ENCODE measurements at regions of chr2 and their contacts with region 1.

Region 1: DNA sequence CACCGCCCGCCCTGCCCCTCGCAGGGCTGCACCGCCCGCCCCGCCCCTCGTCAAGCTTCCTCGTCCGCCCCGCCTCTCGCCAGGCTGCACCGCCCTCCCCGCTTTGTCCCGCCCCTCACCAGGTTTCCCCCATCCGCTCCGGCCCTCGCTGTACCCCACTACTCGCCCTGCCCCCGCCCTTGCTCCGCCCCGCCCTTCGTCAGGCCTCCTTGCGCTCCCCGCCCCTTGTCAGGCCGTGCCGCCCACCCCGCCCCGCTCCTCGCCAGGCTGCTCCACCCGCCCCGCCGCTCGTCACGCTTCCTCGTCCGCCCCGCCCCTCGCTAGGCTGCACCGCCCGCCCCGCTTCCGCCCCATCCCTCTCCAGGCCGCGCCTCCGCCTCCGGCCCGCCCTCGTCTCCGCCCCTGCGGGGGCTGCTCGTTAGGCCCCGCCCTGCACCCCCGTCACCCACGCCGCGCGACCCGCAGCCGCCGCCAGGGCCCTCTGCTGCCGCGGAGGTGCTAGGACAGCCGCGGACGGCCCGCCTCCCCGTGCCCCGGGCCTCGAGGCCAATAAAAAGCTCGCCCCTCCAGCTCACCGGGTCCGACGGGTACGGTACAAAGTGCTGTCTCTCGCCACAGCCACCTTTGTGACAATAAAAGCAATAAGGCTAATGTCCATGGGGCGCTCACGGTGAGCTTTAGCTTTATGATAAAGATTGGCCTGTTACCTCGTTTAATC is 574 bp upstream of the DNPEP start:
- DNase-seq: peak; percentile 100
- ATAC-seq: peak; percentile 81
- H3K4me3 Mint-ChIP-seq: peak overlapping the region; percentile 97
- H3K27ac Mint-ChIP-seq: peak overlapping the region; percentile 82
- H3K4me1 Mint-ChIP-seq: peaks cover 9% of the 10 kb centered on the region
- H3K27me3 Mint-ChIP-seq: no peaks in the 10 kb centered on the region

Region 2: GRCh38 chr2:218269899-218270720 is 1118.2 kb before region 1 on chr2 and contains the starts of genes AAMP and PNKD:
- CTCF ChIA-PET with region 1: no interaction called
- POLR2A ChIA-PET with region 1: no interaction called
- intact Hi-C with region 1: loop called (anchors 1 to 5 kb)
- DNase-seq: peak; percentile 100
- ATAC-seq: peak; percentile 92
- H3K4me3 Mint-ChIP-seq: peak within 1 kb of the TSS; percentile 88
- H3K27ac Mint-ChIP-seq: peak within 1 kb of the TSS; percentile 86
- H3K4me1 Mint-ChIP-seq: peaks cover 34% of the 10 kb centered on the region
- H3K27me3 Mint-ChIP-seq: no peaks in the 10 kb centered on the region
- total RNA-seq, gene AAMP: 49.7 to 72.2 TPM
- total RNA-seq, gene PNKD: 17.8 to 18.5 TPM

Region 3: GRCh38 chr2:218710687-218711549 is 677.4 kb before region 1 on chr2 and contains the start of gene TTLL4:
- CTCF ChIA-PET with region 1: interaction called, 3 read pairs
- POLR2A ChIA-PET with region 1: no interaction called
- intact Hi-C with region 1: loop called in 1 of 2 experiments (anchors 1 kb)
- DNase-seq: peak; percentile 99
- ATAC-seq: peak; percentile 98
- H3K4me3 Mint-ChIP-seq: peak within 1 kb of the TSS; percentile 96
- H3K27ac Mint-ChIP-seq: peak within 1 kb of the TSS; percentile 80
- H3K4me1 Mint-ChIP-seq: peaks cover 20% of the 10 kb centered on the region
- H3K27me3 Mint-ChIP-seq: no peaks in the 10 kb centered on the region
- total RNA-seq, gene TTLL4: 33.7 to 46.6 TPM

Region 4: DNA sequence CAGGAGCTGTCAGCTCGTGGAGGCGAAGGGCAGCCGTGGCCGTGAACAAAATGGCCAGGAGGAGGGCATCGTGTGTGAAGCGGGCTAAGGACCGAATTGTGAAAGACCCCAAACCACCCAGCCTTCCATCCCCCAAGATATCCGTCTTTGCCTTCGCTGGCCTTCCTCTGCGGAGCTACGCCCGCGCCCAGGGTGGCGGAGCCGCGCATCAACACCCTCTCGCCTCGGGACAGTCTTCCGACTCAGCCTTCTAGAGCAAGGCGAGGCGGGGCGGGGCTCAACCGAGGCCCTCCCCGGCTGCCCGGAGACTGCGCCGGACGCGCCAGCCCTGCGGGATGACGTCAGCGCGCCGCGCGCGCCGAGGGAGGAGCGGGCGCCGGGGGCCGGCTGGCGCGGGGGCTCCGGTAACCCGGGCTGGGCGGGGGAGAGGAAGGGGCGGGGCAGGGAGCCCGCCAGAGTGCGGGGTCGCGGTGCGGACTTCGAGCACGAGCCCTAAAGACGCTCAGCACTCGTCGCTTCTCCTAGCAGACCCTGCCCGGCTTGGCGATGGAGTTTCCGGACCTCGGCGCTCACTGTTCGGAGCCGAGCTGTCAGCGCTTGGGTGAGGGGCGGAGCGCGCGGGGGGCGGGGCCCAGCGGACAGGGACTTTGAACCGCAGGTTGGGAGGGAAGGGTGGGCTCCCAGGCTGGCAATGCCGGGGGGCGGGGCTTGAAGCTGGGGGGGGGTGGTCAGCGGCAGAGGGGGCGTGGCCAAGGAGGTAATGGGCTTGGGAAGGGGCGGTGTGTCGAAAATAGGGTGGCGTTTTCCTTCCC is 181.6 kb before region 1 on chr2 and contains the start of gene ZFAND2B:
- CTCF ChIA-PET with region 1: interaction called, 3 read pairs
- POLR2A ChIA-PET with region 1: no interaction called
- intact Hi-C with region 1: loop called (anchors 1 to 2 kb)
- DNase-seq: peak; percentile 98
- ATAC-seq: peak; percentile 96
- H3K4me3 Mint-ChIP-seq: peak within 1 kb of the TSS; percentile 86
- H3K27ac Mint-ChIP-seq: peak within 1 kb of the TSS; percentile 94
- H3K4me1 Mint-ChIP-seq: peaks cover 34% of the 10 kb centered on the region
- H3K27me3 Mint-ChIP-seq: no peaks in the 10 kb centered on the region
- total RNA-seq, gene ZFAND2B: 21.5 to 27.6 TPM

Region 5: GRCh38 chr2:219278655-219279516 is 109.4 kb before region 1 on chr2 and contains the start of gene DNAJB2:
- CTCF ChIA-PET with region 1: no interaction called
- POLR2A ChIA-PET with region 1: interaction called, 3 read pairs
- intact Hi-C with region 1: loop called (anchors 1 kb)
- DNase-seq: peak; percentile 100
- ATAC-seq: peak; percentile 86
- H3K4me3 Mint-ChIP-seq: peak within 1 kb of the TSS; percentile 96
- H3K27ac Mint-ChIP-seq: peak within 1 kb of the TSS; percentile 95
- H3K4me1 Mint-ChIP-seq: peaks cover 37% of the 10 kb centered on the region
- H3K27me3 Mint-ChIP-seq: no peaks in the 10 kb centered on the region
- total RNA-seq, gene DNAJB2: 51.8 to 62.8 TPM

Region 6: GRCh38 chr2:219530048-219530963 is 142.0 kb after region 1 on chr2:
- CTCF ChIA-PET with region 1: interaction called, 10 read pairs
- POLR2A ChIA-PET with region 1: no interaction called
- intact Hi-C with region 1: no loop called
- DNase-seq: peak; percentile 93
- ATAC-seq: peak; percentile 97
- H3K4me3 Mint-ChIP-seq: no peak overlapping the region
- H3K27ac Mint-ChIP-seq: no peak overlapping the region
- H3K4me1 Mint-ChIP-seq: no peaks in the 10 kb centered on the region
- H3K27me3 Mint-ChIP-seq: peaks cover 49% of the 10 kb centered on the region

Region 7: GRCh38 chr2:220259662-220260061 is 871.4 kb after region 1 on chr2:
- CTCF ChIA-PET with region 1: no interaction called
- POLR2A ChIA-PET with region 1: no interaction called
- intact Hi-C with region 1: no loop called
- DNase-seq: no peak
- ATAC-seq: no peak
- H3K4me3 Mint-ChIP-seq: no peak overlapping the region
- H3K27ac Mint-ChIP-seq: no peak overlapping the region
- H3K4me1 Mint-ChIP-seq: no peaks in the 10 kb centered on the region
- H3K27me3 Mint-ChIP-seq: no peaks in the 10 kb centered on the region

Measured in activated CD4-positive, alpha-beta T cell treated with anti-CD3 and anti-CD28 coated beads for 36 hours (primary cell).